ENCODE measurements at regions of chr3 and their contacts with region 1.

Region 1: DNA sequence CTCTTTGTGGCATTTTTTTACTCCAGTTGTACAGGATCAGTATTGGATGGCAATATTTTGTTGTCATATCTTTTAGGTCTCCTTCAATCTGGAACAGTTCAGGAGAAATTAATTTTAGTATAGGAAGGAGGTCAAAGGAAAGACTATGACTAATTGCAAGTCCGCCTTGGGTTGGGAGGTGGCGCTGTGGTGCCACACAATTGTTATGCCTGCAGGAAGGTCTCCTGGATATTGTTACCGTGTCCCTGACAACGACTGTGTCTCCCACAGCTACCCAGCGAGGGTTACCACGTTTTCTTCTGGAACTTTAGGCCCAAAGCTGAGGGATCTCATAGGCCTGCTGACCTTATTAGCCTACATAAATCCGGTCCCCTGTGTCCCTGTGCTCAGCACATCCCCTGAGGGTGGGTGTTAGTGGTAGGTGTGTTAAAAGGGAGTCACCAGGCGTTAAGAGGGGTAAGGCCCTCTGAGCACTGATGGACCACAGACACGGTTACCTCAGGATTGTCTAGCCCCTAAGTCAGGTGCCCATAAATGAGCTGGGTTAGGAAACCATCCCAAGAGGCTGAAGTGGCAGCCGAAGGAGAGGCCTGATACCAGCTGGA is 31.5 kb downstream of the KCNAB1 start:
- DNase-seq: peak; percentile 79
- ATAC-seq: peak; percentile 72

Region 2: GRCh38 chr3:156449712-156450574 is 298.0 kb after region 1 on chr3:
- intact Hi-C with region 1: loop called (anchors 10 kb)
- DNase-seq: no peak
- ATAC-seq: peak; percentile 71

Region 3: GRCh38 chr3:156509189-156510174 is 357.6 kb after region 1 on chr3:
- intact Hi-C with region 1: loop called (anchors 1 kb)
- DNase-seq: no peak
- ATAC-seq: peak; percentile 75

Region 4: GRCh38 chr3:156674046-156674910 is 522.4 kb after region 1 on chr3 and contains the start of gene TIPARP:
- intact Hi-C with region 1: loop called (anchors 5 kb)
- DNase-seq: peak; percentile 100
- ATAC-seq: peak; percentile 96
- total RNA-seq, gene TIPARP: 28.2 TPM